Caco-2 (cell line): ENCODE measurements at regions of chr20 and their contacts with region 1.

Region 1: DNA sequence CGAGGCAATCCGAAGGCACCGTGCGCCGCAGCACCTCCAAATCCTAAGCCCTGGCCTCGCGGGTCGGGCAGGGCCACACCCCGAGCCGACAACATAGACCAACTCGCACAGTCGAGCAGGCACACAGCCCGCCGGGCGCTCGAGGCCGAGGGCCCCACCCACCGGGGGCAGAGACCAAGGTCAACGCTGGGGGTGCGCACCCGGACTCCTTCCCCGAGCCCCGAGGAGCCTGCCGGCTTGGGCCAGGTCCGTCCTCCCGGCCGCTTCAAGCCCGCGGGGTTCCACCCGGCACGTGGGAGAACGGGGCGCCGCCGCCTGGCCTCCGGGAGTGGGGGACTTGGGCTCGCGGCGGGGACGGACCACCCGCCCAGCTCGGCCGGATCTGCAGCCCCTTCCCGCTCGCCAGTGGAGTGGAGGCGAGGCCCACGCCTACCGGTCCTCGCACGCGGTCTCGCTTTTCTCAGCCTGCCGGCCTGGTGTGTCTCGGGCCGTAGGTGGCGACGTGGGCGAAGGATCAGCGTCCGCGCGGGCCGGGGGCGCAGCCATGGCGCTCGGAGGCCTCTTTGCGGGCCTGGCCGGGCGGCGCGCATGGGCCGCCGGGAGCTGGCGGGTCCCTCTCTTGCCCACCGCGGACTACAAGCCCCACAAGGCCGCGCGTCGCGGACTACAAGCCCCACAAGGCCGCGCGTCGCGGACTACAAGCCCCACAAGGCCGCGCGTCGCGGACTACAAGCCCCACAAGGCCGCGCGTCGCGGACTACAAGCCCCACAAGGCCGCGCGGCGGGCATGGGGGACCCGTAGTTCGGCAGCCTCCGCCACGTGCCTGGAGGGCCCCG is at the start of gene UCKL1:
- DNase-seq: peak; percentile 97 to 99
- H3K4me3 ChIP-seq: peak within 1 kb of the TSS; percentile 99
- H3K4me3 Mint-ChIP-seq: peak within 1 kb of the TSS; percentile 89
- H3K27ac Mint-ChIP-seq: peak within 1 kb of the TSS; percentile 94
- H3K4me1 ChIP-seq: peaks cover 22% of the 10 kb centered on the region
- H3K4me1 Mint-ChIP-seq: peaks cover 43% of the 10 kb centered on the region
- H3K27me3 ChIP-seq: no peaks in the 10 kb centered on the region
- H3K27me3 Mint-ChIP-seq: no peaks in the 10 kb centered on the region
- CTCF ChIP-seq: peak in 1 of 2 experiments; percentile 34
- total RNA-seq, gene UCKL1: 101 and 113 TPM in 2 replicates

Region 2: DNA sequence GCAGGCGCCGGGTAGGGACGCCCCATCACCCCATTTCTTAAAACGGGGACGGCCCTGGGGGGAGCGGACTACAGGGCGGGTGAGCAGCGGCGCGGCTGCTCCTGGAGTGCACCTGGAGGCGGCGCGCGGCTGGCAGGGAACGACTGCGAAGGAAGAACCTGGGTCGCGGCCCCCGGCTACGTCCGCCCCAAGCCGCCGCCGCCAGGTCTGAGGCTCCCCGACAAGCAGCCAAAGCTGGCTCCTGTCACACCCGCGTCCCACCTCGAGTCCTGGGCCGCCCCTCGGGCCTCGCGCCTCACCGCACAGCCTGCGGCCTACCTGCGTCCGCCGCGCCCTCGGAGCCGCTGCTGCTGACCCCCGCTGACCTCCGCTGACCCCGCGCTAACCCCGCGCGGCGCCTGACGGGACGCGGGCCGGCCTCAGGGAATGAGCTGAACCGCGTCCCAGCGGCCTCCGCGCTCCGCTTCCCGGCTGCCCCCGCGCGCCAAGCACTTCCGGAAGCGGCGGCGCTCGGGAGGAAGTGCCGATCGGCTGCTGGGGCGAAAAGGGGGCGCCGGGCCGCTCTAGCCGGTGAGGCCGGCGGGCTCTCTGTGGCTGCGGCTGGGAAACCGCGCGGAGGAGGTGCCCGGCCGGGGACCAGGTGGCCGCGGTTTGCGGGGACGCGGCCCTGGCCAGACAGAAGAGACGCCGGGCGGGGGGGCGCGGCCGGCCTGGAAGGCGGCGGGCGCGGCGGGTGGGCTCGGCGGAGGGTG is 248.3 kb before region 1 on chr20 and contains the starts of genes ARFRP1 and ZGPAT:
- CTCF ChIA-PET with region 1: interaction called, 6 read pairs
- POLR2A ChIA-PET with region 1: interaction called, 8 read pairs
- intact Hi-C with region 1: loop called (anchors 2 kb)
- DNase-seq: peak; percentile 94 to 99
- H3K4me3 ChIP-seq: peak within 1 kb of the TSS; percentile 96
- H3K4me3 Mint-ChIP-seq: peak within 1 kb of the TSS; percentile 87
- H3K27ac Mint-ChIP-seq: peak within 1 kb of the TSS; percentile 84
- H3K4me1 ChIP-seq: peaks cover 14% of the 10 kb centered on the region
- H3K4me1 Mint-ChIP-seq: peaks cover 16% of the 10 kb centered on the region
- H3K27me3 ChIP-seq: no peaks in the 10 kb centered on the region
- H3K27me3 Mint-ChIP-seq: no peaks in the 10 kb centered on the region
- CTCF ChIP-seq: peak in 1 of 2 experiments; percentile 13
- total RNA-seq, gene ARFRP1: 119 and 126 TPM in 2 replicates
- total RNA-seq, gene ZGPAT: 69.3 and 74.7 TPM in 2 replicates

Region 3: GRCh38 chr20:63734946-63735858 is 220.8 kb before region 1 on chr20:
- CTCF ChIA-PET with region 1: no interaction called
- POLR2A ChIA-PET with region 1: no interaction called
- intact Hi-C with region 1: no loop called
- DNase-seq: no peak
- H3K4me3 ChIP-seq: no peak overlapping the region
- H3K4me3 Mint-ChIP-seq: no peak overlapping the region
- H3K27ac Mint-ChIP-seq: peak overlapping the region; percentile 32
- H3K4me1 ChIP-seq: peaks cover 13% of the 10 kb centered on the region
- H3K4me1 Mint-ChIP-seq: peaks cover 7% of the 10 kb centered on the region
- H3K27me3 ChIP-seq: no peaks in the 10 kb centered on the region
- H3K27me3 Mint-ChIP-seq: no peaks in the 10 kb centered on the region
- CTCF ChIP-seq: no peak

Region 4: GRCh38 chr20:63873477-63873971 is 82.5 kb before region 1 on chr20:
- CTCF ChIA-PET with region 1: no interaction called
- POLR2A ChIA-PET with region 1: no interaction called
- intact Hi-C with region 1: no loop called
- DNase-seq: no peak
- H3K4me3 ChIP-seq: no peak overlapping the region
- H3K4me3 Mint-ChIP-seq: no peak overlapping the region
- H3K27ac Mint-ChIP-seq: no peak overlapping the region
- H3K4me1 ChIP-seq: no peaks in the 10 kb centered on the region
- H3K4me1 Mint-ChIP-seq: no peaks in the 10 kb centered on the region
- H3K27me3 ChIP-seq: no peaks in the 10 kb centered on the region
- H3K27me3 Mint-ChIP-seq: no peaks in the 10 kb centered on the region
- CTCF ChIP-seq: no peak

Region 5: GRCh38 chr20:63894358-63895201 is 61.5 kb before region 1 on chr20 and contains the start of gene DNAJC5:
- CTCF ChIA-PET with region 1: interaction called, 5 read pairs
- POLR2A ChIA-PET with region 1: interaction called, 4 read pairs
- intact Hi-C with region 1: loop called (anchors 2 kb)
- DNase-seq: peak; percentile 99 to 100
- H3K4me3 ChIP-seq: peak within 1 kb of the TSS; percentile 61
- H3K4me3 Mint-ChIP-seq: peak within 1 kb of the TSS; percentile 76
- H3K27ac Mint-ChIP-seq: peak within 1 kb of the TSS; percentile 85
- H3K4me1 ChIP-seq: peaks cover 27% of the 10 kb centered on the region
- H3K4me1 Mint-ChIP-seq: peaks cover 27% of the 10 kb centered on the region
- H3K27me3 ChIP-seq: no peaks in the 10 kb centered on the region
- H3K27me3 Mint-ChIP-seq: no peaks in the 10 kb centered on the region
- CTCF ChIP-seq: no peak
- total RNA-seq, gene DNAJC5: 117 and 124 TPM in 2 replicates

Region 6: DNA sequence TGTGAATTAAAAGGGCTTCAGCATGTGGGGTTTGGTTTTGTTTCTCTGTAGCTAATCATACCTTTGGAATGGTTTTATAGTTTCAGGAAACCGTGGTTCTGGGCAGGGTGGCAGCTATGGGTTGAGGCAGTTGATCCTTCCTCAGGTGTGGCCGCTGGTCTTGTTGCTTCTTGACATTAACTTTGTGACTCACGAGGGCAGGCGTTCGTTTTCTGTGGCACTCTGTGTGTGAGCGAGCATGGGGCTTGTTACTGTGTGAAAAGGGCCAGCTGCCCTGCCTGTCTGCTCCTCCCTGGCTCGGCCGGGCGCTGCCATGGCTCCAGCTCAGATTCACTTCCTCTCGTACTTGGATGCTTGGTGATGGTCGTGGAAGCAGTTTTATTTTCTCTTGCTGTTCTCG is 44.9 kb before region 1 on chr20:
- CTCF ChIA-PET with region 1: interaction called, 5 read pairs
- POLR2A ChIA-PET with region 1: interaction called, 6 read pairs
- intact Hi-C with region 1: loop called (anchors 1 kb)
- DNase-seq: no peak
- H3K4me3 ChIP-seq: no peak overlapping the region
- H3K4me3 Mint-ChIP-seq: no peak overlapping the region
- H3K27ac Mint-ChIP-seq: no peak overlapping the region
- H3K4me1 ChIP-seq: peaks cover 30% of the 10 kb centered on the region
- H3K4me1 Mint-ChIP-seq: peaks cover 37% of the 10 kb centered on the region
- H3K27me3 ChIP-seq: no peaks in the 10 kb centered on the region
- H3K27me3 Mint-ChIP-seq: no peaks in the 10 kb centered on the region
- CTCF ChIP-seq: no peak

Region 7: DNA sequence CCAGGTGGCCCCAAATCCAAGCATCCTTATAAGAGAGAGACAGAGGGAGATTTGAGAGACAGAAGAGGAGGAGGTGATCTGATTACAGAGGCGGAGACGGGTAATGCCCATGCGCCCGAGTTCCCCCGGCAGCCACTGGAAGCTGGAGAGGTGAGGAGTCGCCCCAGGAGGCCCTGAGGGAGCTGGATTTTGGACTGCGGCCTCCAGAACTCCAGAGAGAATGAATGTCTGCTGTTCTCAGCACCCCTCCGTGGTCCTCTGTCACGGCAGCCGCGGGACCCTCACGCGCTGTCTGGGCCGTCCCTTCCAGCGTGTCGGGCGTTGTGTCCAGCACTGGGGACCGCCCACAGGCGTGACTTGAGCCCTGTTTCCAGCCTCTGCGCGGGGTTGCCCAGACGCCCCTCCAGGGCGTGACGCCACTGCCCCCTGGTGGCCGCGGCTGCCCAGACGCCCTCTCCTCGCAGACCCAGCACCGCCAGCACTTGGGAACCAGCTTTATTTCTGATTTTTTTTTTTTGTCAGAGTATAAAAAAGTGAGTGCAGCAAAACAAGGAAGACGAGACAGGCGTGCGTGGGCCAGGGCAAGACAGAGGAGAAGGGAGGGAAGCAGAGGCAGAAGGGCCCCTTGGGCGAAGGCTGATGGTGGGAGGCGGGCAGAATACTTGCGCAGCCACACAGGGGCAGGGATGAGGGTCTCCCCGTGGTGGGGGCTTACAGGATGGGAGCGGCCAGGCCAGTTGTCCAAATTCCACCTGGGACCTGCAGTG is 17.8 kb after region 1 on chr20:
- CTCF ChIA-PET with region 1: interaction called, 13 read pairs
- POLR2A ChIA-PET with region 1: interaction called, 9 read pairs
- intact Hi-C with region 1: loop called (anchors 1 kb)
- DNase-seq: peak; percentile 92 to 98
- H3K4me3 ChIP-seq: peak overlapping the region; percentile 38
- H3K4me3 Mint-ChIP-seq: peak overlapping the region; percentile 63
- H3K27ac Mint-ChIP-seq: peak overlapping the region; percentile 1
- H3K4me1 ChIP-seq: peaks cover 26% of the 10 kb centered on the region
- H3K4me1 Mint-ChIP-seq: peaks cover 22% of the 10 kb centered on the region
- H3K27me3 ChIP-seq: no peaks in the 10 kb centered on the region
- H3K27me3 Mint-ChIP-seq: peaks cover 3% of the 10 kb centered on the region
- CTCF ChIP-seq: peak; percentile 100

Region 8: GRCh38 chr20:64062596-64063388 is 106.7 kb after region 1 on chr20 and contains the start of gene TCEA2:
- CTCF ChIA-PET with region 1: interaction called, 6 read pairs
- POLR2A ChIA-PET with region 1: interaction called, 3 read pairs
- intact Hi-C with region 1: loop called (anchors 1 kb)
- DNase-seq: peak; percentile 99 to 100
- H3K4me3 ChIP-seq: peak within 1 kb of the TSS; percentile 74
- H3K4me3 Mint-ChIP-seq: peak within 1 kb of the TSS; percentile 81
- H3K27ac Mint-ChIP-seq: peak within 1 kb of the TSS; percentile 16
- H3K4me1 ChIP-seq: peaks cover 23% of the 10 kb centered on the region
- H3K4me1 Mint-ChIP-seq: peaks cover 28% of the 10 kb centered on the region
- H3K27me3 ChIP-seq: no peaks in the 10 kb centered on the region
- H3K27me3 Mint-ChIP-seq: no peaks in the 10 kb centered on the region
- CTCF ChIP-seq: no peak
- total RNA-seq, gene TCEA2: 39.9 and 48.3 TPM in 2 replicates

Region 9: GRCh38 chr20:64145458-64145857 is 189.4 kb after region 1 on chr20:
- CTCF ChIA-PET with region 1: no interaction called
- POLR2A ChIA-PET with region 1: no interaction called
- intact Hi-C with region 1: no loop called
- DNase-seq: peak; percentile 54 to 60
- H3K4me3 ChIP-seq: no peak overlapping the region
- H3K4me3 Mint-ChIP-seq: no peak overlapping the region
- H3K27ac Mint-ChIP-seq: no peak overlapping the region
- H3K4me1 ChIP-seq: no peaks in the 10 kb centered on the region
- H3K4me1 Mint-ChIP-seq: peaks cover 5% of the 10 kb centered on the region
- H3K27me3 ChIP-seq: no peaks in the 10 kb centered on the region; the same call in 1 of the 2 replicates
- H3K27me3 Mint-ChIP-seq: peaks cover 12% of the 10 kb centered on the region
- CTCF ChIP-seq: peak; percentile 21 to 28

Region 10: DNA sequence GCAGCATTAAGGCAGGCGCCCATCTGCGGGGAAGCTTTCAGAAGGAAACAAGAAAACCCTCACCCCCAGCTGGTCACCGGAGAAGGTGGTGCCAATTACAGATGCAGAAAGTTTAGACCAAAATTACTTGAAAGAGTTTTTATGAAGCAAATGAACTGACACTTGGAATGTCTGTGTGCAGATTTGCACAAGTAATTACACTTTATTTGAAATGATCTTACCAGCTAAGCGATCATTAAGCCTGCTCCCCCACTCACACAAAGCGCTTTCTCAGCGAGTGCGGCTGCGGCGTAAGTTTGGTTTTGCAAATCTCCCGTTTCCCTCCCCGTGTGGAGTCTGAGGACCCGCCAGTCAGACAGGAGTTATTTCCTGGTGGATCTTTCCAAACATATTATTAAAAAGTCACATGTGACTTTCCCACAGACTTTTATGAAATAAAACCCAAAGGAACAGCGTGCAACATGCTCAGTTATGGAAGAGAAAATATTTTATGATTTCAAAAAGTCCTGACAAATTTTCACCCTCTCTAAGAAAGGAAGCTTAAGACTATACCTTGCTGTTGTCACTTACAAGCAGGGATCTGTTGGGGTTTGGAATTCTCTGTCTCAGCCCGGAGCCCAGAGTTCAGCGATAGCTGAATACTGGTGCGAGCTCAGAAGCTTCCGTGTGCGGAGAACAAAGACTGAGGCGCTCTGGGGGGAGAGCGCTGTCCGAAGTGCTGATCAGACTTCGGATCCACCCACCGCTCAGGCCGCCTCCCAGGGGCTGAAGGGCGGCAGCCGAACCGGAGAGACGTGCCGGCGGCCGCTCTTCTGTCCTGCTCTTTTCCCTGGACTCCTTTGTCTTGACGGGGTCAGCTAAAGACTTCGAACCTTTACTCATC is 205.6 kb after region 1 on chr20:
- CTCF ChIA-PET with region 1: no interaction called
- POLR2A ChIA-PET with region 1: no interaction called
- intact Hi-C with region 1: no loop called
- DNase-seq: peak; percentile 75 to 85
- H3K4me3 ChIP-seq: no peak overlapping the region
- H3K4me3 Mint-ChIP-seq: no peak overlapping the region
- H3K27ac Mint-ChIP-seq: no peak overlapping the region
- H3K4me1 ChIP-seq: no peaks in the 10 kb centered on the region
- H3K4me1 Mint-ChIP-seq: no peaks in the 10 kb centered on the region
- H3K27me3 ChIP-seq: peaks cover 5% of the 10 kb centered on the region
- H3K27me3 Mint-ChIP-seq: peaks cover 40% of the 10 kb centered on the region
- CTCF ChIP-seq: no peak